Mucosa of descending colon (tissue), 3 donors: ENCODE measurements at regions of chr9 and their contacts with region 1.

Region 1: DNA sequence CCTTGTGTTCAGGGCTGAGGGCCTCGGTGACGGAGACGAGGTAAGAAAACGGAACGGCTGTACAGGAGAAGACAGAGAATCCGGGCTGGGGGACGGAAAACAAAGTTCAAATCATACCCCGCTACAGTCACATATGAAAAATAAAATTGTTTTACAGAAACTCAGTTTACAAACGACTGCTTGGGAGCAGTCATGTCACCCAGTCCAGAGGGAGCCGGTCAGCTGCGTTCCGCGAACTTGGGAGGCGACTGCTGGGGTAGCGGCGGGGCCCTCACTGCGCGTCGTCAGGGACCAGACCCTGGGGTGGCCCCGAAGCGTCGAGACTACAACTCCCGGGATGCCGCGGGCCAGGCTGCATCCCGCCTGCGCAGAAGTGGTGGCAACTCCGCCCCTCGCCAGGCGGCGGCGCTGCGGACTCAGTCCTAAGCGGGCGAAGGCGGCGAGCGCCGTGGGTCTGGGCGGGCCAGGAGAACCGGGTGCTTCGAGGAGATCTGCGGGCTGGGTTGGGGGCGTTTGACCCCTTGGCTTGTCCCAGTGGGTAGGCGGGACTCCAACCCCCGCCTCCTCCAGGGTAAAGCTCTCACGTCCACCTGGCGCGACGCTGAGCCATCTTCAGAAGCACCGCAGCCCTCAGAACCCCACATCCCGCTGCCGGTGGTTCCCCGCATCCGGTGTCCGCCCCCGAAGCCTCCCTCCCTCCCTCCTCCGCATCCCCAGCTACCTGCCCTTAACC is 4.0 kb downstream of the SIT1 start:
- DNase-seq: peak; percentile 96 to 97 (median 97)
- ATAC-seq: peak; percentile 96
- H3K4me3 ChIP-seq: peak overlapping the region; percentile 12
- H3K4me1 ChIP-seq: peaks cover 7% of the 10 kb centered on the region
- CTCF ChIP-seq: peak; percentile 92

Region 2: GRCh38 chr9:35705836-35706430 is 59.2 kb after region 1 on chr9:
- intact Hi-C with region 1: loop called in 1 of 2 experiments (anchors 10 kb)
- DNase-seq: no peak
- ATAC-seq: no peak
- H3K4me3 ChIP-seq: no peak overlapping the region
- H3K4me1 ChIP-seq: no peaks in the 10 kb centered on the region
- CTCF ChIP-seq: no peak